ENCODE measurements at regions of chr6 and their contacts with region 1.

Region 1: DNA sequence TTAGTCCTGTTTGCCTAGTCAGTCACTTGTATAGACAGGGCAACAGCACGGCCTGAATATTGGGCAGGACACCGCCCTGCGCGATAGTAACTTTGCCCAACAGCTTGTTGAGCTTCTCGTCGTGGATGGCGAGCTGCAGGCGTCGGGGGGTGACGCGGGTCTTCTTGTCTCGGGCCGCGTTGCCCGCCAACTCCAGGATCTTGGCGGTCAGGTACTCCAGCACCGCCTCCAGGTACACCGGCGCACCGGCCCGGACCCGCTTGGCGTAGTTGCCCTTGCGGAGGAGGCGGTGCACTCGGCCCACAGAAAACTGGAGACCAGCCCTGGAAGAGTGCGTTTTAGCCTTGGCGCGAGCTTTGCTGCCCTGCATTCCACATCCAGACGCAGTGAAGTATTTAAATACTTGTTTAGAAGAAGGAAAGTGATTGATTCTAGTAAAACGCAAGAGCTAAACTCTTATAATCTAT is 92.8 kb upstream of the BTN3A2 start:
- DNase-seq: no peak
- ATAC-seq: no peak
- H3K4me3 ChIP-seq: peak overlapping the region; percentile 77; the same call in 1 of the 3 replicates
- H3K27ac ChIP-seq: peak overlapping the region; percentile 96 to 98
- H3K4me1 ChIP-seq: peaks cover 12% of the 10 kb centered on the region
- CTCF ChIP-seq: no peak
- EP300 ChIP-seq: no peak
- POLR2A ChIP-seq: no peak
- RAD21 ChIP-seq: no peak

Region 2: DNA sequence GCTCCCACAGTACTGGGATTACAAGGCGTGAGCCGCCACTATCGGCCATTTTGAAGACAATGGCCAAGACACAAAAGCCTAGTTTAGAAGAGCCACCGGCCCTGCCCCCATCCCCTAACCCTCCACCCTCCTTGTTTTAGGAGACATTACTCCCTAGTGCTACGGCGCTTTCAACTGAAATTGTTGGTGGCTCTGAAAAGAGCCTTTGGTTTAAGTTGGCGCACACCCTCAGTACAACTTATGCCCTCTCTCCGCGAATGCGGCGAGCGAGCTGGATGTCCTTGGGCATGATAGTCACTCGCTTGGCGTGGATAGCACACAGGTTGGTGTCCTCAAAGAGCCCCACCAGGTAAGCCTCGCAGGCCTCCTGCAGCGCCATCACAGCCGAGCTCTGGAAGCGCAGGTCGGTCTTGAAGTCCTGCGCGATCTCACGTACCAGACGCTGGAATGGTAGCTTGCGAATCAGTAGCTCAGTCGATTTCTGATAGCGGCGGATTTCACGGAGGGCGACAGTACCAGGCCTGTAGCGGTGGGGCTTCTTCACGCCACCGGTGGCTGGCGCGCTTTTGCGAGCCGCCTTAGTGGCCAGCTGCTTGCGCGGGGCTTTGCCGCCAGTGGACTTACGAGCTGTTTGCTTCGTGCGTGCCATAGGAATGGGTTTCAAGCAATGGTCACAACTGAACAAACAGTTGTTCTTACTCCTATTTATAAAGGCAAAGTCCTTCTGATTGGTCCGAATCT is 22.1 kb before region 1 on chr6:
- CTCF ChIA-PET with region 1: interaction called, 8 read pairs
- POLR2A ChIA-PET with region 1: interaction called, 28 read pairs
- DNase-seq: peak in 1 of 2 experiments; percentile 82
- ATAC-seq: peak; percentile 91 to 95
- H3K4me3 ChIP-seq: peak overlapping the region; percentile 49
- H3K27ac ChIP-seq: peak overlapping the region; percentile 84 to 91
- H3K4me1 ChIP-seq: no peaks in the 10 kb centered on the region
- CTCF ChIP-seq: no peak
- EP300 ChIP-seq: no peak
- POLR2A ChIP-seq: peak; percentile 63
- RAD21 ChIP-seq: no peak

Region 3: GRCh38 chr6:26285143-26286134 is 13.2 kb after region 1 on chr6:
- CTCF ChIA-PET with region 1: interaction called, 4 read pairs
- POLR2A ChIA-PET with region 1: interaction called, 53 read pairs
- DNase-seq: peak; percentile 65 to 99
- ATAC-seq: peak; percentile 81 to 90
- H3K4me3 ChIP-seq: peak overlapping the region; percentile 64
- H3K27ac ChIP-seq: peak overlapping the region; percentile 93 to 94
- H3K4me1 ChIP-seq: peaks cover 34% of the 10 kb centered on the region
- CTCF ChIP-seq: no peak
- EP300 ChIP-seq: peak; percentile 37 to 63; a peak in 2 of 5 replicates
- POLR2A ChIP-seq: peak; percentile 92
- RAD21 ChIP-seq: no peak